ENCODE measurements at regions of chr1 and their contacts with region 1.

Region 1: DNA sequence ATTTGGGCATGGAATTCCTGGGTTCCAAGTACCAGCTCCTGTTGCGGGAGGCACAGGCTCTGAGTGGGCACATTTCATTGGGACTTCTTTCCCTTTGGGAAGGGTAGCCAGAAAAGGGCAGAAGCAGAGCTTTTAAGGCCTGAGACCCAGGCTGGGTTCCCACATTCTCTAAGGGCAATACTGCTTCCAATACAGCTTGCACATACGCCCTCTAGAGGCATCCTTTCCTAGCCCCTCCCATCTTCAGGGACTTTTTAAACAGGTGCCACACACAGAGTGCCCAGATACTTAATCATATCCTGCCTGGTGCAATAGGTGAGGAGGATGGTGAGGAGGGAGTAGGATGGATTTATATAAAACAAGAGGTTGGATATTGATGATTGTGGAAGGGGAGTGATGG is 5.7 kb downstream of the GPR88 start:
- DNase-seq: peak; percentile 62
- ATAC-seq: peak; percentile 37
- H3K4me3 Mint-ChIP-seq: no peak overlapping the region
- H3K27ac Mint-ChIP-seq: no peak overlapping the region
- H3K4me1 Mint-ChIP-seq: peaks cover 11% of the 10 kb centered on the region
- H3K27me3 Mint-ChIP-seq: peaks cover 46% of the 10 kb centered on the region

Region 2: DNA sequence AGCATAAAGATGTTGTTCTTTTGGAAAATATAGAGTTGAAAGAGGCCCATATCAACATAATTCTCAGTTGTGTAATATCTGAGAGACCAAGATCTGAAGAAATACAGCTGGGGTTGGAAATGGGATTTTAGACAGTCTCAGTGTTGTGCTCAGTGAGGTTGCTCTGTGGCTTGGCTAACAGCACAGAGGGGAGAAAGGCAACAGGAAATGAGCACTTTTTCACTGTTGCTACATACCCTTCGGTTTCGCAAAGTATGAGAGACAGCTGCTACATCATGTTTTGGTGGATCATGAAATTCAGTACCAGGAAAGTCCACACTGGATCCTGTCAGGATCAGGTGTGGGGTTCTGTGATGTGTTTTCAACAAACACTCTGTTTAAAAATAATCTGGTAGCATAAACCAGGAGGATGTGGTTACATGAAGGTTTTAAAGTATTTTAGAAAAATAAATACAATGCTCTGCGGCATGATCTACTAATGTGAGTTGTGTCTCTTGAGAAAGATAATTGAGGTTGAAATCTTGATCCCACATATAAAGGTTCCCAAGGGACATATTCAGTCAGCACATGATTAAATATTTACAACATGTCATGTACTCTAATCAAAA is 12.7 kb before region 1 on chr1:
- CTCF ChIA-PET with region 1: interaction called, 26 read pairs
- DNase-seq: peak; percentile 70
- ATAC-seq: peak; percentile 94
- H3K4me3 Mint-ChIP-seq: peak overlapping the region; percentile 31
- H3K27ac Mint-ChIP-seq: peak overlapping the region; percentile 71
- H3K4me1 Mint-ChIP-seq: peaks cover 44% of the 10 kb centered on the region
- H3K27me3 Mint-ChIP-seq: peaks cover 15% of the 10 kb centered on the region

Region 3: DNA sequence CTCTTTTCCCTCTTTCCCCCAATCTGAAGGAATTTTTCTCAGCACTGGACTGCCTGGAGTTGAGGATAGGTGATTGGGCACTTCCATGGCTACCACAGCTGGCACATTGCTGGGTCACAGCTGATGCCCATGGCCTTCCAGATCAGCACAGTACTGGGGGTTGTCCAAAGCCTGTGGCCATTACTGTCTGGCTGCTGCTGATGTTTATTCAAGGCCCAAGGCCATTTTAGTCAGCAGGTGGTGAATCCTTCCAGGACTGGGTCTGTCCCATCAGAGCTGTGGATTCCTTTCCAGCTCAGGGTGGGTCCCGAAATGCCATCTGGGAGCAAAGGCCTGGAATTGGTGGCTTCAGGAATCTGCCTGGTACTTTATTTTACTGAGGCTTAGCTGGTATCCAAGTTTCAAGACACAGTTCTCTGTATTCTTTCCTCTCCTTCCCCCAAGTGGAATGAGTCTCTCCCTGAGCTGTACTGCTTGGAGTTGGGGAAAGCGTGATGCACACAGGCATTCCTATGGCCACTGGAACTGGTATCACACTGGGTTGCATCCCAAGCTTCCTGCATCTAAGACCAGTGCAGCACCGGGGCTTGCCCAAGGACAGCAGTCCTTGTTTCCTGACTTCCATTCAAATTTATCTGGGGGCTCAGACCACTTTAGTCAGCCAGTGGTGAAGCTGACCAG is 13.4 kb after region 1 on chr1:
- CTCF ChIA-PET with region 1: no interaction called
- DNase-seq: no peak
- ATAC-seq: no peak
- H3K4me3 Mint-ChIP-seq: no peak overlapping the region
- H3K27ac Mint-ChIP-seq: no peak overlapping the region
- H3K4me1 Mint-ChIP-seq: no peaks in the 10 kb centered on the region
- H3K27me3 Mint-ChIP-seq: peaks cover 31% of the 10 kb centered on the region

Measured in activated CD8-positive, alpha-beta memory T cell treated with anti-CD3 and anti-CD28 coated beads, Interleukin-2, amount 10 ng/mL, durations not matched to agents 7 days and 5 days (primary cell).